Astrocyte of the cerebellum (primary cell): ENCODE measurements at regions of chr12 and their contacts with region 1.

Region 1: DNA sequence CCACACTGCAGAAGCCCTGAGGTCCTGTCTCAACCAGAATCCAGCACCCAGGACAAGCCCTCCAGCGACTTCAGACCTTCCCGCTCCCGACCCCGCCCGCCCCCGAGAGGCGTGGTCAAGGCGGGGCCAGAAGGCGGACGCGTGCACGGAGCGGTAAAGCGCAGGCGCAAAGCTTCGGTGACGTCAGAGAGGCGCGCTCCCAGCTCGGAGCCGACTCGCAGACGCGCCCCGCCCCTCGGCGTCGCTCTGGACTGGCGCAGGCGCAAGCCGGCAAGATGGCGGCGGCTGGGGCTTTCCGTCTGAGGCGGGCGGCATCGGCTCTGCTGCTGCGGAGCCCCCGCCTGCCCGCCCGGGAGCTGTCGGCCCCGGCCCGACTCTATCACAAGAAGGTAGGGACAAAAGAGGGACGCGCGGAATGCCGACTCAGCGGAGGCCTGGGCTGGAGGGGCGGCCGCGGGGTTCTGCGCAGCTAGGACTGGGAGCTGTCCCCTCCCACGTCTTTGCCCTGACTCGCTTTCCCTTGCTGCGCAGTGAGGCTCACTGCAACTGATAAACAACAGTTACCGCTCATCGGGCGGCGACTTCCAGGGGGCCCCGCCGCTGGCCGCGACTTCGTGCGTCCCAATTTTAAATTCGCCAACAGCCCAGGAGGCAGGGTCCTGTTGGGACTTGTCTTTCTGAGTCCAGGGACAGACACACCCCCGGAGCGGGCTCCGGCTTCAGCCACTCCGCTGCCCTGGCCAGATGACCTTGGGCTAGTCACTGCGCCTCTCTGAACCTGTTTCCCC is at the start of gene ISCU:
- DNase-seq: peak; percentile 92
- H3K4me3 ChIP-seq: peak within 1 kb of the TSS; percentile 100
- CTCF ChIP-seq: no peak

Region 2: DNA sequence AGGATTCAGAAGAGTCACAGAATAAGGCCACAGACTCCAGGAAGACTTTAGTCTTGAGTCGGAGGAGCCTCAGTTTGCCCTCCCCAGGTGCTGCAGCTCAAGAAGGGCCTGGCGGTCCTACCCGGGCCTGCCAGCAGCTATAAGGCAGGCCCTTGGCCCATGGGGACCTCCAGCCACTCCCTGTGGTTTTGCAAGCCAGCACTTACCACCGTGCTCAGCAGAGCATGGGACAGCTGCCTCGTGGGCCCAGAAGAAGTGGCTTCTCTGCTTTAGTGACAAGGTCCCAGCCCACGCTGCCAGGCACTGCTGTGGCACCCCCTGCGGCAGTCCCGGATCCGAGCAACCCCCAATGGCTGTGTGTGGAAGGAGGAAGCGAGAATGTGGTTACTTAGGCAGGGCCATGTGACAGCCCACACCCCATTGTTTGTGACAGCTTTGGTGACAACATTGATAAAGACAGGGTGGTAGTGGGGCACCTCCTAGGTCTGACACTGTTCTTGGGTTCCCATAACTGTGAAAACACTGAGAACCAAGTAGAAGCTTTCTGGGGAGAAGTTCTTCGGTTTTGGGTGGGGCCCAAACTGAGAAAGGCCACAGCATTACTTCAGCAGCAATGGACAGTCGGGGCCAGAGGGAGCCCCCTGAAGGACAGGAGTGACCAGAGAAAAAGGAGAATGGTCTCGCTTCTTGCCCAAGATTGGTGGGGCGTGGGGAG is 71.1 kb after region 1 on chr12 and contains the start of gene SELPLG:
- in situ Hi-C with region 1: loop called (anchors 5 kb)
- DNase-seq: no peak
- H3K4me3 ChIP-seq: no peak within 1 kb of the TSS
- CTCF ChIP-seq: no peak

Region 3: GRCh38 chr12:108649669-108650068 is 87.1 kb after region 1 on chr12:
- in situ Hi-C with region 1: no loop called
- DNase-seq: peak; percentile 91
- H3K4me3 ChIP-seq: no peak overlapping the region
- CTCF ChIP-seq: no peak

Region 4: DNA sequence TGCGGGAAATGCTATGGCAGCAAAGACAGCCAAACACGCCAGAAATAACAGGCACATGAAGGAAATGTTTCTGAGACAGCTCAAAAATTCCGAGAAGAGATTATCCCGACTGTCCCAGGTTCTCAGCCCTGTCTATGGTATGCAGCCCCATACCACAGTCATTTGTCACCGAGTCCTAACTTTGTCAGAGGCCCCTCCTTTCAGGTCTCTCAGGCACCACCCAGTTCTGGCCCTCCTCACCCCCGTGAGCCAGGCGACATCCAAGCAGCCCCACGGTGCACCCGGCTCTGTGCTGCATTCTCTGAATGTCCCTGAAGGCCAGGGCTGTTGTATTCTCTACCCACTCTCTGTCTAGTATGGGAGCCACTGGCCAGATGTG is 270.8 kb after region 1 on chr12:
- in situ Hi-C with region 1: loop called (anchors 5 kb)
- DNase-seq: peak; percentile 67
- H3K4me3 ChIP-seq: peak overlapping the region; percentile 11
- CTCF ChIP-seq: no peak